Psoas muscle (tissue), 8 donors: ENCODE measurements at regions of chr1 and their contacts with region 1.

Region 1: GRCh38 chr1:167927046-167927754 is 9.3 kb upstream of the DCAF6 start:
- DNase-seq: no peak
- ATAC-seq: no peak
- H3K4me3 ChIP-seq: no peak overlapping the region
- H3K27ac ChIP-seq: peak overlapping the region; percentile 51
- H3K4me1 ChIP-seq: peaks cover 69% of the 10 kb centered on the region
- H3K27me3 ChIP-seq: no peaks in the 10 kb centered on the region
- CTCF ChIP-seq: no peak

Region 2: GRCh38 chr1:167819849-167820683 is 107.1 kb before region 1 on chr1:
- intact Hi-C with region 1: loop called in 1 of 2 experiments (anchors 5 kb)
- DNase-seq: peak; percentile 90 to 94
- ATAC-seq: peak; percentile 98 to 99 (median 99)
- H3K4me3 ChIP-seq: peak overlapping the region; percentile 40
- H3K27ac ChIP-seq: peak overlapping the region; percentile 84
- H3K4me1 ChIP-seq: peaks cover 10% of the 10 kb centered on the region
- H3K27me3 ChIP-seq: no peaks in the 10 kb centered on the region
- CTCF ChIP-seq: no peak

Region 3: DNA sequence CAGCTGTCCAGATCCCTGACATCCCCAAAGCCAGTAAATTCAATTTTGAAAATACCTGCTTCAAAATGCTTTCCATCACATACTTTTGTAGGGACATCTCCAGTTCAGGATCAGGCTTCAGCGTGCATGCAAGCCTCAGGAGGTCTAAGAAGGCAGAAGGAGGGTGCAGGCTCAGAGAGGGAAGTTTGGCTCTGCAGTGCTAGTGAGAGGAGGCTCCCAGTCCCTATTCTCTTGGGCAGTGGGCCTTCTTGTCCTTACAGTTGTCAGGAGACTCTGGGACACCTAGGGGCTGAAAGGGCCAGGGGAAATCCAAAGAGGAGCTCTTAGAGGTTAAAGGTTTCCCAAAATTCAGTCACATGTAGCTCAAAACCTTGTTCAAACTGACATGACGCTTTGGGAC is 33.4 kb before region 1 on chr1:
- intact Hi-C with region 1: no loop called
- DNase-seq: no peak
- ATAC-seq: no peak
- H3K4me3 ChIP-seq: no peak overlapping the region
- H3K27ac ChIP-seq: no peak overlapping the region
- H3K4me1 ChIP-seq: no peaks in the 10 kb centered on the region
- H3K27me3 ChIP-seq: no peaks in the 10 kb centered on the region
- CTCF ChIP-seq: no peak

Region 4: GRCh38 chr1:168161459-168161858 is 234.3 kb after region 1 on chr1:
- intact Hi-C with region 1: no loop called
- DNase-seq: no peak
- ATAC-seq: no peak
- H3K4me3 ChIP-seq: no peak overlapping the region
- H3K27ac ChIP-seq: no peak overlapping the region
- H3K4me1 ChIP-seq: no peaks in the 10 kb centered on the region
- H3K27me3 ChIP-seq: no peaks in the 10 kb centered on the region
- CTCF ChIP-seq: no peak